Ascending aorta (tissue), 2 donors: ENCODE measurements at regions of chr3 and their contacts with region 1.

Region 1: DNA sequence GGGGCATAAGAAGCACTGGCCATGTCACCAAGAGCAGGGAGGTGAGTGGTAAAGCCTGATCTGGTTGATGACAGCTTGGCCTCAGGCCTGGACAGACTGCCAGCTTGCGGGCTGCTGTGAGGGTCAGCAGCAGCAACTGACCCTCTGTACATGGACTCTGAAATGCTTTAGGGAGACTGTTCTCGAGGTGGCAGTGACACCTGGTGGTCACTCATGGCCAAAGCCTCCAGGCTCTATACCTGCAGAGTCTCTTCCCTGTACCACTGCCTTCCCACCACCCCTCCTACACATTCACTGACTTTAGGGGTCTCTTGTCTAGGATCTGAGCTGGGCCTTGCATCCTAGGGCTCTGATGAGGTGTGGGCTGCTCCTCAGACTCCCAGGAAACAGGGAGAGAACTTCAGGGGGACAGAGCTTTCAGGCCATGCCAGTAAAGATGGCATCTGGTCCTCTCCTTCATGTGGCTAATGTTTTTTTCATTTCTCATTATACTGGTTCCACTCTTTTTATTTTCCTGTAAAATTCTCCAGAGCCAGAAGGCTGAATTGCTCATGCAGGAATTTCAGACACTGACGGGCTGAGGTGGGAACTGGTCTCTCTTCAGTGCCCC is 17.2 kb upstream of the TIMP4 start:
- DNase-seq: peak in 1 of 2 donors; percentile 82
- H3K4me3 ChIP-seq: no peak overlapping the region
- H3K27ac ChIP-seq: no peak overlapping the region
- H3K4me1 ChIP-seq: peaks cover 5 to 32% of the 10 kb centered on the region in 2 donors
- H3K27me3 ChIP-seq: no peaks in the 10 kb centered on the region
- CTCF ChIP-seq: peak; percentile 81 to 91 (median 84)

Region 2: GRCh38 chr3:12135029-12135657 is 40.8 kb before region 1 on chr3:
- intact Hi-C with region 1: loop called (anchors 1 kb)
- DNase-seq: peak in 1 of 2 donors; percentile 84
- H3K4me3 ChIP-seq: no peak overlapping the region
- H3K27ac ChIP-seq: no peak overlapping the region
- H3K4me1 ChIP-seq: no peaks in the 10 kb centered on the region
- H3K27me3 ChIP-seq: no peaks in the 10 kb centered on the region
- CTCF ChIP-seq: peak; percentile 85 to 88 (median 87)